ENCODE measurements at regions of chr10 and their contacts with region 1.

Region 1: DNA sequence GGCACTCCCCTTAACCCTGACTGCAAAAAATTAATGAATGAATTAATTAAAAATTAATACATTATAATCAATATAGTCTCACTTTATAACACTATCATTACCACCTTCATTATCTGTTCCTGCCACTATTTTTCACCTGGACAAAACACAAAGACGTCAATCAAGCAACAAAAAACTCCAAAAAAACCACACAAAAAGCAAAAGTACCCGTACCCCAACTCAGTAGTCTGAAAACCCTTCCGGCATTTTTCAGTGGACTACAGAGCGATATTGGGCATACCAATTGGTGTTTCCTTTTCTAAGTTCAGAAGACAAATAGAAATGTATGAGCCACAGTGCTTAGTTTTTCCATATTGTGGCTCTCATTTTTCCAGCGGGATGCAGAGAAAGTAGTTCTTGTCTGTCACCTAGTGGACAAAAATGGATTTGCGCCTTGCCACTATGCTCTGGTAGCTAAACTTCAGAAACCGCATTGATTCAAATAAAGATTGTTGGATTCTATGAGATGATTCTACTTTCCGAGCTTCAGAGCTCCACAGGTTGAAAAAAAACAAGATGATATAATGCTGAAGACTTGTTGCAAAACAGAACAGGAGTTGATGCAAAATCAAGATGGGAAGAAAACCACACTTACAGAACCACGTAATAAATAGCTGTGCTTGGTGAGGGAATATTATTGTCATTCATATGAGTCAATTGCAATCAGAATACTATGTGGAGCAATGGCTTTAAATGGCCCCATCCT is 50.6 kb upstream of the ITGB1 start:
- DNase-seq: peak; percentile 92
- ATAC-seq: peak; percentile 43
- H3K4me3 ChIP-seq: no peak overlapping the region
- H3K27ac ChIP-seq: no peak overlapping the region; the same call in 1 of the 2 replicates
- H3K4me1 ChIP-seq: peaks cover 11% of the 10 kb centered on the region
- H3K27me3 ChIP-seq: no peaks in the 10 kb centered on the region
- CTCF ChIP-seq: peak; percentile 99
- POLR2A ChIP-seq: peak; percentile 56; the same call in 1 of the 2 replicates
- RAD21 ChIP-seq: peak; percentile 98

Region 2: DNA sequence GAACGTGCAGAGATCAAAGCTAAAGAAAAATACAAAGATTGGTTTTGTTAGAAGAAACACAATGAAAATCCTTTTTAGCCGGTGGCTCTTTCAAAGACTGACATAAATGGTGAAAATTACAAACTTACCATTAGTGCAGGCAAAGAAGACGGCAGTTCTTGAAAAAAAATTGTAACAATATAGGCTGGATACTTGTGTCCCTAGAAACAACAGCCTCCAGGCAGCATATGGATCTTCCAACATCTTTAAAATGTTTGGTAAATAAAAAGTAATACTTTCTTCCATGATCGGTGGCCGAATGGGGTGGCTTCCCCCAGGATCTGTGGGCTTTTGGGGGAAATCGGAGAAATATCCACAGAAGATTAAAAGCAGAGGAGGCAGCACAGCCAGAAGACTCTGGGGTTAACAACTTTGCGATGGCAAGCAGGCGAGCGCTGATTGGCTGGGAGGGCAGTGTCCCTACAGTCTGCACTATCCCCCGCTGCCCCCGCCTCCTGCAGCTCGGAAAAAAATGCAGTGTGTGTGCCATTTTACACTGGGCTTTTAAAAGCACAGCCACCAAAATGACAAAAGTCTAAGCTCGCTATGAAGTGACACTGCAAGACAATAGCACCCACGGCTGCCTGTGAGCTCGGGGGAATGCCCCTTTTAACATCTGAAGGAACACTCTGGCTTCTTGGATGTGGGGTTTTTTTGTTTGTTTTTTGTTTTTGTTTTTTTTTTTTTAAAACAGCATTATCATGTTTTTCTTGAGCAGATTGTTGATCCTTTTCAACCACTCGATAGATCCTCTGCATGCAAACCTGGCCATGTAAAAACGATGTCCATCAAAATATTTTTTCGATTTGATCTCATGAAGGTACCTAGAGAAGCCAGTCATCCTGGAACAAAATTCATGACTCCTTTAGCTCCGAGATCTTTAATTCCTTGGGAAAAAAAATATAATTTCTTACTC is 630.0 kb before region 1 on chr10:
- CTCF ChIA-PET with region 1: no interaction called
- POLR2A ChIA-PET with region 1: no interaction called
- dilution Hi-C with region 1: no loop called
- in situ Hi-C with region 1: no loop called
- intact Hi-C with region 1: loop called (anchors 2 kb)
- DNase-seq: peak; percentile 85
- ATAC-seq: peak; percentile 97
- H3K4me3 ChIP-seq: peak overlapping the region; percentile 62
- H3K27ac ChIP-seq: peak overlapping the region; percentile 86
- H3K4me1 ChIP-seq: 0 out of 2 replicates have a peak, but pooled peaks cover 1% of the 10 kb centered on the region
- H3K27me3 ChIP-seq: no peaks in the 10 kb centered on the region
- CTCF ChIP-seq: no peak
- POLR2A ChIP-seq: peak; percentile 58; the same call in 1 of the 2 replicates
- RAD21 ChIP-seq: no peak

Region 3: GRCh38 chr10:32893431-32893830 is 115.2 kb before region 1 on chr10:
- CTCF ChIA-PET with region 1: no interaction called
- POLR2A ChIA-PET with region 1: no interaction called
- dilution Hi-C with region 1: no loop called
- in situ Hi-C with region 1: no loop called
- intact Hi-C with region 1: loop called (anchors 5 kb)
- DNase-seq: no peak
- ATAC-seq: no peak
- H3K4me3 ChIP-seq: no peak overlapping the region
- H3K27ac ChIP-seq: no peak overlapping the region
- H3K4me1 ChIP-seq: no peaks in the 10 kb centered on the region
- H3K27me3 ChIP-seq: no peaks in the 10 kb centered on the region
- CTCF ChIP-seq: no peak
- POLR2A ChIP-seq: no peak
- RAD21 ChIP-seq: no peak

Region 4: GRCh38 chr10:32980558-32981468 is 27.9 kb before region 1 on chr10:
- CTCF ChIA-PET with region 1: interaction called, 4 read pairs
- POLR2A ChIA-PET with region 1: no interaction called
- dilution Hi-C with region 1: no loop called
- in situ Hi-C with region 1: no loop called
- intact Hi-C with region 1: loop called (anchors 1 kb)
- DNase-seq: peak; percentile 100
- ATAC-seq: peak; percentile 89
- H3K4me3 ChIP-seq: peak overlapping the region; percentile 57
- H3K27ac ChIP-seq: peak overlapping the region; percentile 90
- H3K4me1 ChIP-seq: peaks cover 23% of the 10 kb centered on the region
- H3K27me3 ChIP-seq: no peaks in the 10 kb centered on the region
- CTCF ChIP-seq: 0 out of 2 replicates have a peak, but pooled peaks have one; percentile 5
- POLR2A ChIP-seq: peak; percentile 97
- RAD21 ChIP-seq: peak; percentile 42; the same call in 1 of the 2 replicates

Region 5: DNA sequence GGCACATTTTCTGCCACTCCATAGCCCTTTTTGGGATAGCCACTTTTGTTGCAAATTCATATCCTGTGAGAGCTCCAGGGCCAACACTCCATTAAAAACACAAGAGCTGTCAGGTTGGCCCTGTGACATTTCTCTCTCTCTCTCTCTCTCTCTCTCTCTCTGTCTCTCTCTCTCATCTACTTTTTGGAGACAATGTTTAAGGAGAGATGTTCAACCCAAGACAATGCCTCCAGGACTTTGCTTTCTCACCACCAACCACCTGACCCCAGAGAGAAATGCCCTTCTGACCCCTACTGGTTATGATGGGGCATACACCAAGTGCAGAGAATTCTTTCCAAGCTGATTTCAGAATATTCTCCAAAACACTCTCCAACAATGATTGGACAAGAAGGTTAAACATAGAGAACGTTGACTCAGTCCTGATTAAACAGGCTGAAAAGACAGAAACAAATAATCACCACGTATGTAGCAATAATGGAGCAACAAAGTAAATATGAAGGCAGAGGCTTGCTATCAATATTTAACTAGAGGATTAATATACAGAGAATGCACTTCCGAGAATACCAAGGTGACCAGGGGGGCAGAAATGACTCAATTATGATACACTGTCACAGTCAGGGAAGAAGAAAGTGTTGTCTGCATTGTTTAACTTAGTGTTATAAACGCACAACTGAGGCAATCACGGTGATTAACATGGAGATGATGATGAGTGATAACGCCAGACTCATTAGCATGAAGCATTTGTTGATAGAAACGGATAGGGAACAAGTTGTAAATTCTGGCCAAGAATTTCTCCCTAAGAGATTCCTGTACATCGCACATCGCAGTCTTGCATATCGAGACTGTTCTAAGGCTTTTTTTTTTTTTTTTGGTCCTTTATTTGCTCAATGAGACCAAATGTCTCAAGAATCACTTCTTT is 147.3 kb after region 1 on chr10:
- CTCF ChIA-PET with region 1: interaction called, 18 read pairs
- POLR2A ChIA-PET with region 1: no interaction called
- dilution Hi-C with region 1: no loop called
- in situ Hi-C with region 1: loop called (anchors 10 kb)
- intact Hi-C with region 1: loop called (anchors 1 kb)
- DNase-seq: peak; percentile 91
- ATAC-seq: peak; percentile 97
- H3K4me3 ChIP-seq: no peak overlapping the region
- H3K27ac ChIP-seq: peak overlapping the region; percentile 51
- H3K4me1 ChIP-seq: peaks cover 9% of the 10 kb centered on the region
- H3K27me3 ChIP-seq: no peaks in the 10 kb centered on the region
- CTCF ChIP-seq: peak; percentile 90
- POLR2A ChIP-seq: no peak
- RAD21 ChIP-seq: peak; percentile 86